ENCODE measurements at regions of chr2 and their contacts with region 1.

Region 1: DNA sequence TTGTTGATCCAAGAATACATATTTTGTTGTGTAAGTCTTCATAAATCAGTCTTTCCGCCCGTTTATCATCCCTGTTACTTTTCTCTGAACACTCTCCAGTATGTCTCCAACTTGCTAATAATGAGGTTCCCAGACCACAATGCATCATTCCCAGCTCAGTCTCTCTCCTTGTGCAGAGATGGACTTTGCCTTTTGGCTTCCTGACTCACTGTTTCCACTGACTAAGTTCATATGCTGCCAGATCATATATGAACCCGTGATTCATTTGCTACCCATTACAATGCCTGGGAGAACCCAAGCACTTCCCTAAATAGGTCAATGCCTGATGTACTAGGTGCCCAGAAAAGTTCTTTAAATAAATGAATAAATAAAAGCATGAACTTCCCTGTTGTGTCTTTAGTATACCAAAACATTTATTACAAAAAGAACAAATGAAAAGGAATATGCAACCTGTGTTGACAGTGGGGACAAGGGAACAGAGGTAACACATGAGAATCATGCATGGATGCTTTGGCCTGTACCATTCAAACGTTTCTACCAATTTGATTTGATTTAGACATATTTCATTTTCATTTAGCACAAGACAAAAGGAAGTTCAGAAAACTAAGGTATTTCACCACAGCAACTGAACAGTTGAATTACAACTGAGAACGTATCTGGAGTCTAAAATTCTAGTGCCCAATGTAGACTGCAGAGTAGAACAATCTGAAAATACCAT is 215.4 kb upstream of the HNRNPA3 start:
- DNase-seq: no peak
- H3K4me3 Mint-ChIP-seq: no peak overlapping the region
- H3K27ac Mint-ChIP-seq: peak overlapping the region; percentile 78
- H3K4me1 Mint-ChIP-seq: peaks cover 24% of the 10 kb centered on the region
- H3K27me3 Mint-ChIP-seq: peaks cover 10% of the 10 kb centered on the region

Region 2: DNA sequence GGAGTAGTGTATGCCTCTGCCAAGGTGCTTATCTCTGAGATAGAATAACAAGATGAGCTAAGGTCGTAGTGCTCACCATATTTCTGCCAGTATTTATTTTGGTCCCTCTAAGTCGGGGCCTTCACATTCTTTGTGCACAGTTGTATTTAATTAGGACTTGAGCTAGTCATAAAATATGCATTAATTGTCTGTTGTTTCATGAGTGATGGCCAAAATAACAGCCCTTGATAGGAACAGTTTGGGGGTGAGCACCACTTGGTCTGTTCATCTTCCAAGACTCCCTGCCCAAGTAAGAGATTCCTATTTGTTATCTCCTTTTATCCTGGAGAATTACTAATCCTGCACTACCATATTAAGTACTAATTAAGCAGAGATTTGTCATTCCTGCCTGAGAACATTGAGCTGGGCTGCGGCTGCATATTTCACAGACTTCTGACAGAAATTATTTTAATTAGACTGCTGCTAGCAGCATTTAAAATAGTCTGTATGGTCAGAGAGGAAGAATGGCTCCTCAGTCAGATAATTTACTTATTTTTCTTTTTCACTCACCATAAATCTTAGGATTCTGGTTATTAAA is 292.9 kb before region 1 on chr2:
- intact Hi-C with region 1: no loop called
- DNase-seq: no peak
- H3K4me3 Mint-ChIP-seq: no peak overlapping the region
- H3K27ac Mint-ChIP-seq: no peak overlapping the region
- H3K4me1 Mint-ChIP-seq: no peaks in the 10 kb centered on the region
- H3K27me3 Mint-ChIP-seq: peaks cover 20% of the 10 kb centered on the region

Region 3: DNA sequence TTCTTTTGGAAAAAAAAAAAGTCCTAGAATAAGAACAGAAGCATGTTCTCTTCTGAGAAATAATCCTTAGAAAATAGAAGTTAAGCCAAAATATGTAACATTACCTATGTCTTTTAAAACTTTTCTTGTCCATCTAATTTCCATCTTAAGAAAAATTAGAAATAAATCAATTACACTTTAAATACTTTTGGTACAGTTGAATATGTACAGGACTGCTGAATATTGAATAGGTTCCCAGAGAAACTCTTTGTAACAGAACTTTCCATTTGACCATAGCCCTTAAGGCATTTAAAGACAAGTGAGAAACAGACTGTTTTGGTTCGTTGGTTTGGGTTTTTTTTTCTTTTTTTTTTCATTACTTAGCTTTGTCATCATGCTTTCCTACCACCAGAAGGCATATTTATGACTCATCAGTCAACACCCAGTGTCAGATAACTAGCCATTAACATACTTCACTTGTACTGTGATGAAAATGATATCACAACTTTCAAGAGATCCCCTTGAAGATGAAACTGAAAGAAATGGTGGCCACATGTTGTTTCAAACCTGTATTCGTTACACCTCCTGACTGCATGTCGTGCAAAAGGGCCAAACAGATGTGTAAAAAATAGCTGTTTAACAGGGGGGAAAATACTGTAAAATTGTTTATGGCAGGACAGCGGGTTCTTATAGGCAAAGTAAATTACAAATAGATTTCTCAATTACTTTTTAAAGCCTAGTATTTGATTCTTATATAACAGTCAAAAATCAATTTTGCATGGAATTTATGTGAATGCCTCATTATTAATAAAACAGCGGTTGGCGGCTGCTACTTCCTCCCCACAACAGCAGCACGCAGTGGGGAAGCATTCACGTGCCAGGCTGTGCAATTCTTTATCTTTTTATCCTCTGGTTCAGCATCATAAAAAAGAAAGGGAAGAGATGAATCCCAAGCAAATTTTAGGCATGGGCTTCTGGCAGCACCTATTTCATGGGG is 65.4 kb before region 1 on chr2:
- intact Hi-C with region 1: loop called (anchors 1 kb)
- DNase-seq: peak; percentile 31
- H3K4me3 Mint-ChIP-seq: no peak overlapping the region
- H3K27ac Mint-ChIP-seq: peak overlapping the region; percentile 93
- H3K4me1 Mint-ChIP-seq: peaks cover 28% of the 10 kb centered on the region
- H3K27me3 Mint-ChIP-seq: no peaks in the 10 kb centered on the region

Region 4: DNA sequence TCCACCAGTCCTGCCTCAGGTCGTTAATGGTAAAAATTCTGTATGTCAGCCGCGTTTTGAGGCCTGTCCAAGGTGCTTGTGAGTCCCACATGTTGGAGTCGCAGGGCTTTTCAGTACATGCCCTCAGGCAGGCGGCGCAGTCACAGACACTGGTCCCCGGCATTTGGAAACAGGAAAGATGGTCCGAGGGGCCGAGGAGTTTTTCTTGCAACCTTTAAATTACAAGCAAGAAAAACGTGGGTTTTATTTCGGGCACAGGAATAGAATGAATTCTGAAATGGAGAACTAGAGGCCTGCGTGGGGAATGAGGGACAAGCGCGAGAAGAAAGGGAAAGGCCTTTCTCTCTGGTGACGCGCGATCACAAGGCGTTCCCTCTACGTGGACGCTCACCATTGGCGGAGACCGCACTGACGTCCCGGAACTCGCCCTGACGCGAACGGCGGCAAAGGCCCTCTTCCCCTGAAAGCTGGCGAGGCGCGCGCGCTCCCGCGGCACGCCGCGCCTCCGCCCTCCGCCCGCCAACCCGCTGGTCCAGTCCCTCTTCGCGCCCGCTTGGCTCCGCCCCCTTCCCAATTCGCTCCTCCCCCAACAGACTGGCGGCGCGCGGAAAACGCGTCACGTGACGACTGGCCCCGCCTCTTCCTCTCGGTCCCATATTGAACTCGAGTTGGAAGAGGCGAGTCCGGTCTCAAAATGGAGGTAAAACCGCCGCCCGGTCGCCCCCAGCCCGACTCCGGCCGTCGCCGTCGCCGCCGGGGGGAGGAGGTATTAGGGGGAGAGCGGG is 215.1 kb after region 1 on chr2 and contains the start of gene HNRNPA3:
- intact Hi-C with region 1: no loop called
- DNase-seq: peak; percentile 100
- H3K4me3 Mint-ChIP-seq: peak within 1 kb of the TSS; percentile 96
- H3K27ac Mint-ChIP-seq: peak within 1 kb of the TSS; percentile 100
- H3K4me1 Mint-ChIP-seq: peaks cover 33% of the 10 kb centered on the region
- H3K27me3 Mint-ChIP-seq: no peaks in the 10 kb centered on the region
- total RNA-seq, gene HNRNPA3: 322 and 323 TPM in 2 replicates

Measured in activated T-helper 2 cell treated with anti-CD3 and anti-CD28 coated beads, Interferon-gamma antibody, Interleukin-2, Interleukin-4, amounts not matched to agents 10 μg/mL and 5 μg/mL and 100 μg/mL, durations not matched to agents 14 hours and 24 hours and 36 hours (primary cell).